ENCODE measurements at regions of chr1 and their contacts with region 1.

Region 1: GRCh38 chr1:151693076-151693651 is 23.4 kb downstream of the CELF3 start:
- DNase-seq: peak; percentile 36
- H3K4me3 ChIP-seq: no peak overlapping the region
- H3K27ac ChIP-seq: no peak overlapping the region
- H3K4me1 ChIP-seq: no peaks in the 10 kb centered on the region
- CTCF ChIP-seq: peak; percentile 79

Region 2: DNA sequence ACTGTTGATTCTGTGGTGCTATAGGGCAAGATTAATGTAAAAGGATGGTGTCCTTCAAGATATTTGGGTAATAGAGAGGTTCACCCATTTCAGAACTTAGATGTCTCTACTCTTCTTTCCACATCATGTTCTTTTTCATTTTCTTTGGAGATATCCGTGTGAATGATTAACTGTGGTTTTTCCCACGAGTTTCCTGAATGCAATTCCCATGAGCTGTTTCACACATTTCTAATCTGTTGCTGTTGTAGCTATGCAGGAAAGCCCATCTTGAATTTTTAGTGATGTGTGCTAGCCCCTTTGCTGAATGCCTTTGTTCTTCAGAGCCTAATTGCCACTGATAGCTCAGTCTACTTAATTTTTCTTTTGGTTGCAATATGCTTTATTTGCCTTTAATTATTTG is 53.7 kb before region 1 on chr1:
- CTCF ChIA-PET with region 1: no interaction called
- POLR2A ChIA-PET with region 1: interaction called, 3 read pairs
- intact Hi-C with region 1: loop called (anchors 5 kb)
- DNase-seq: no peak
- H3K4me3 ChIP-seq: no peak overlapping the region
- H3K27ac ChIP-seq: no peak overlapping the region
- H3K4me1 ChIP-seq: no peaks in the 10 kb centered on the region
- CTCF ChIP-seq: no peak

Region 3: DNA sequence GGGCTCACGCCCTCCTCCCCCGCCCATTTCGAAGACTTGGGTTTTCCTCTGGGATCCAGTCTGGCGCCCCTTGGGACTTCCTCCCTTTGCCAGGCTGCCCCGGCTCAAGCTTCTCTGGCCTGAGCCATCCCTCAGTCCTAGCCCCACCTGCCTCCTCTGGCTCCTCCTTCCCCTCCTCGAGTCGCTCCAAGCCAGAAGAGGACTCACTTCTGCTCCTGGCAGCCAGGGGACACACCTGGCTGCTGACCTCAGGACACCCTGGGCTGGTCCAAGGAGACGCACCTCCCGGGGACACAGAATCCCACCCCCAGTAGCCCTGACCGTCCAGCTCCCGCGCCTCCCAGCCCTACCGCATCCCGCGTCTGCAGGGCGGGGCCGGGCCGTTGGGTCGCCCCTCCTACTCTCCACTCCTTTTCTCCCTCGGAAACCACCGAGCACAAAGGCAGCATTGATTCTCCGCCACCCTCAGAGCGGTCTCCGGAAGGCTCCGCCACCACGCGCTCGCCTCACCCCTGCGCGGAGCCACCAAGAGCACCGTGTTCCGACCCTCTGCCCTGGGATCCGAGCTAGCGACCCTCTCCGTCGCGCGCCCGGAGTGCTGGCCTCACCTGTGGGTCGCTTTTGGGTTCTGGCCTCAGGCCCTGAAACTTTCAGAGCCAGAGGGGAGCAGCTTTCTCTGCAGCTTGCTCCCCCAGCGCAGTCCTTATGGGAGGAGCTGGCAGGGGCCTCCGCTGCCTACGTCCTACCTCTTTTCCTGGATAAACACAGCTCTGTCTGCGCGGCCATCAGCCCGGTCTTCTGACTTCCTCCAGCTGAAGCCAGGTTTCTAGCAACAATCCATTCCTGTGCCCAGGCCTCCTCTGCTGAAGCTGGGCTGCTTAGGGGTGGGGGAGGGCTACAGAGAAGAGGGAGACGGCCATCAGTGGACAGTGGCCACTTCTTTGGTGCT is 146.6 kb after region 1 on chr1 and contains the start of gene C2CD4D:
- CTCF ChIA-PET with region 1: no interaction called
- POLR2A ChIA-PET with region 1: no interaction called
- intact Hi-C with region 1: loop called (anchors 1 kb)
- DNase-seq: no peak
- H3K4me3 ChIP-seq: no peak within 1 kb of the TSS
- H3K27ac ChIP-seq: no peak within 1 kb of the TSS
- H3K4me1 ChIP-seq: peaks cover 16% of the 10 kb centered on the region
- CTCF ChIP-seq: no peak
- total RNA-seq, gene C2CD4D: not detected in 2 replicates

Measured in OCI-LY7 (cell line).